K562 (cell line): ENCODE measurements at regions of chr7 and their contacts with region 1.

Region 1: DNA sequence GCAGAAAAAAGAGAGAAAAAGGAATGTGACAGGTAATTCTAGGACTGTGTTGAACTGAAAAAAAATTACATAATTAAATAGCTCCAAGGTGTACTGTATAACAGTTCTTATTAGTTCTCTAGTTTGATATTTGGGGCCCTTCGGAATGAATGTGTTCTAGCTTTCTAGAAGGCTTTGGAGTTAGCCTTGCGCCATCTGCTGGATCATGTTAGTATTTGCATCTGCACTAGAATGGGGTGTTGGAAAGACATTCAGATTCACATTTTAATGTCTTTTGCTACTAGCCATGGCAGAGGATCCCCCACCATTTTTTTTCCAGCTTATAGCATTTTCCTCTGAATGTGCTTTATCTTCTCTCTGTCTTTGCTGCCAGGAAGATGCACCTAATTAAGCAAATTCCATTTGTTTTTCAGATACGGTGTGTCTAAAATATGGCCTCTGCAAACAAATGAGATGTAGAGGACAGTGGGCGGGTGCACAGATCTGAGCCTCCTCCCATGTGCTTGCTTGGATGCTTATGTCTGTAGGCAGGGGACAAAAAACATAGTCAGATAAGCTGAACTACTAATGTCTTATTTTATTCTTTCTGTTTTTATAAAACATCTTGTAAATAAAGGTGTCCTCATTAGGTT is 238.5 kb downstream of the PHF14 start:
- DNase-seq: peak; percentile 43 to 76 (median 50)
- ATAC-seq: peak; percentile 91
- H3K4me3 ChIP-seq: no peak overlapping the region
- H3K27ac ChIP-seq: no peak overlapping the region
- H3K4me1 ChIP-seq: no peaks in the 10 kb centered on the region
- H3K27me3 ChIP-seq: peaks cover 11 to 15% of the 10 kb centered on the region in 2 experiments
- CTCF ChIP-seq: peak; percentile 61 to 76 (median 75)
- EP300 ChIP-seq: no peak
- POLR2A ChIP-seq: no peak
- RAD21 ChIP-seq: peak; percentile 76 to 85

Region 2: GRCh38 chr7:10952588-10952987 is 259.6 kb before region 1 on chr7:
- CTCF ChIA-PET with region 1: no interaction called
- POLR2A ChIA-PET with region 1: no interaction called
- in situ Hi-C with region 1: no loop called
- intact Hi-C with region 1: no loop called
- DNase-seq: no peak
- ATAC-seq: no peak
- H3K4me3 ChIP-seq: no peak overlapping the region
- H3K27ac ChIP-seq: no peak overlapping the region
- H3K4me1 ChIP-seq: no peaks in the 10 kb centered on the region
- H3K27me3 ChIP-seq: no peaks in the 10 kb centered on the region
- CTCF ChIP-seq: no peak
- EP300 ChIP-seq: no peak
- POLR2A ChIP-seq: no peak
- RAD21 ChIP-seq: no peak

Region 3: GRCh38 chr7:11120068-11120664 is 92.0 kb before region 1 on chr7:
- CTCF ChIA-PET with region 1: no interaction called
- POLR2A ChIA-PET with region 1: no interaction called
- in situ Hi-C with region 1: no loop called
- intact Hi-C with region 1: no loop called
- DNase-seq: no peak
- ATAC-seq: no peak
- H3K4me3 ChIP-seq: no peak overlapping the region
- H3K27ac ChIP-seq: no peak overlapping the region
- H3K4me1 ChIP-seq: no peaks in the 10 kb centered on the region
- H3K27me3 ChIP-seq: no peaks in the 10 kb centered on the region
- CTCF ChIP-seq: no peak
- EP300 ChIP-seq: no peak
- POLR2A ChIP-seq: no peak
- RAD21 ChIP-seq: no peak

Region 4: DNA sequence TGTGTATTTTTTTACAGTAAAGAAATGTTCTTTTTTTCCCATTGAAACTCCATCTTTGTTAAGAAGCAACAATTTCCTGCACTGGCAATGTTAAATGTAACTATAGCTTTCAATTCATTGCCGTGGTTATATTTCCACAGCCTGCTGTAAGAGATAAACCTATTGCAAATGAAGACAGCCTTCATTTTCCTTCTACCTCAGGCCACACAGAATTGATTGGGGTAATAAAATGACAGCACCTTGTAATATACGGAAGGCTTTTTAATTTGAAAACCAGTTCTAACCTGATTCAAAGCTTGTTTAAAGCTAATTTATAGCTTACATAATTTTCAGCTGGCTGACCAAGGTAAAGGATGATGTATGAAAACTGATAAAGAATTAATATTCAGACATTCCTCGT is 76.6 kb before region 1 on chr7:
- CTCF ChIA-PET with region 1: no interaction called
- POLR2A ChIA-PET with region 1: no interaction called
- in situ Hi-C with region 1: no loop called
- intact Hi-C with region 1: no loop called
- DNase-seq: no peak
- ATAC-seq: no peak
- H3K4me3 ChIP-seq: no peak overlapping the region
- H3K27ac ChIP-seq: no peak overlapping the region
- H3K4me1 ChIP-seq: no peaks in the 10 kb centered on the region
- H3K27me3 ChIP-seq: no peaks in the 10 kb centered on the region
- CTCF ChIP-seq: no peak
- EP300 ChIP-seq: no peak
- POLR2A ChIP-seq: no peak
- RAD21 ChIP-seq: no peak

Region 5: GRCh38 chr7:11153694-11154093 is 58.5 kb before region 1 on chr7:
- CTCF ChIA-PET with region 1: no interaction called
- POLR2A ChIA-PET with region 1: no interaction called
- in situ Hi-C with region 1: no loop called
- intact Hi-C with region 1: loop called (anchors 2 kb)
- DNase-seq: no peak
- ATAC-seq: 0 out of 3 replicates have a peak, but pooled peaks have one; percentile 53
- H3K4me3 ChIP-seq: no peak overlapping the region
- H3K27ac ChIP-seq: no peak overlapping the region
- H3K4me1 ChIP-seq: no peaks in the 10 kb centered on the region
- H3K27me3 ChIP-seq: no peaks in the 10 kb centered on the region
- CTCF ChIP-seq: peak in 2 of 3 experiments; percentile 3 to 7; a peak in 2 of 6 replicates
- EP300 ChIP-seq: no peak
- POLR2A ChIP-seq: no peak
- RAD21 ChIP-seq: no peak

Region 6: DNA sequence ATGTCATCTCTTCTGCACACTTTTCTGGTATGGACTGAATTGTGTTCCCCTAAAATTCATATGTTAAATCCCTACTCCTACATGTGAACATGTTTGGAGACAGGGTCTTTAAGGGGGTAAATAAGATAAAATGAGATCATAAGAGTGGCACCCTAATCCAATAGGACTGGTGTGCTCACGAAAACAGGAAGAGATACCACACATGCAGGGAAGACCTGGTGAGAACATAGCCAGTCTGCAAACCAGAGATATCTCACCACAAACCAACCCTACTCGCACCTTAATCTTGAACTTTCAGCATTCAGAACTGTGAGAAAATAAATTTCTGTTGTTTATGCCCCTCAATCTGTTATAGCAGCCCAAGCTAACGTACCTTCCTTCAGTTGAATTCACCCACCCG is 1139.6 kb after region 1 on chr7:
- CTCF ChIA-PET with region 1: no interaction called
- POLR2A ChIA-PET with region 1: no interaction called
- in situ Hi-C with region 1: no loop called
- intact Hi-C with region 1: no loop called
- DNase-seq: peak in 2 of 4 experiments; percentile 36 to 39
- ATAC-seq: peak; percentile 73
- H3K4me3 ChIP-seq: no peak overlapping the region
- H3K27ac ChIP-seq: peak overlapping the region; percentile 53
- H3K4me1 ChIP-seq: peaks cover 0 to 10% of the 10 kb centered on the region in 2 experiments; a peak in 1 of 5 replicates
- H3K27me3 ChIP-seq: no peaks in the 10 kb centered on the region
- CTCF ChIP-seq: no peak
- EP300 ChIP-seq: 0 out of 2 replicates have a peak, but pooled peaks have one; percentile 27
- POLR2A ChIP-seq: no peak
- RAD21 ChIP-seq: no peak